ENCODE measurements at regions of chr12 and their contacts with region 1.

Region 1: DNA sequence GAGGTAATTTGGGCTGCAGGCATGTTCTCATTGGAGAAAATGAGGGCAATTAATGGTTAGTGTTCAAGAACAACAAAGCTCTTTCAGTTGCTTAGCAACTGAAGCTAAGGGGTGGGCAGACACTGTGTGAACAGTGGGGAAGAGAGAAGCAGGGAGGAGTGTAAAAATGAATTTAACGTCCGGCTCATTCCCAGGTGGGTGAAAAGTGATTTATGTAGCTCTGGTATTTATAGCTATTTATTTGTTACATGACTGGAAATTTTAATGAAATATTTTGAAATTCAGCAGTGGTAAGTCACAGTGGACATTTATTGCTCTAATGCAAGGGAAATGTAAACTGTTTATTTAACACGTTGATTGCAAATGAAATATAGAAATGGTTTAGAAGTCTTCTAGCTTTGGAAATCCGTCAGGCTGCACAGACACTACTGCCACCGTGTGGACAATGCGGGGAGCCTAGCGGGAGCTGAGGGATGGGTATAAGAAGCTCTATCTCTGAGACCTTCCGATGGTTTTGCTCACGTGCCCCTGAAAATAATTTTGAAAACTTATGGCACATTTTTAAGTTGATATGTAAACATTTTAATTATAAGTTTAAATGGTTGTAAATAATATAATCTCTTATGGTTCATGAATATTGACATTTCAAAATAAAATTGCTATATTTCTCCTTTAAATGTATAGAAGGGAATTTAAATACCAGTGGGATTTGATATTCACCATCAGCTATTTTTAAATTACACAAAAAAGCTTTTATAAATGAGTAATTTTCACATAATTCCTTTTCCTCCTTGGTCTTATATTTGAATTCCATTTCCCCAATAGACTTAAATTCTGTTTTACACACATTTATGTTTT is 54.4 kb downstream of the E2F7 start:
- DNase-seq: peak; percentile 83
- ATAC-seq: peak; percentile 88
- H3K4me3 Mint-ChIP-seq: peak overlapping the region; percentile 52
- H3K27ac Mint-ChIP-seq: no peak overlapping the region
- H3K4me1 Mint-ChIP-seq: peaks cover 6% of the 10 kb centered on the region
- H3K27me3 Mint-ChIP-seq: no peaks in the 10 kb centered on the region
- CTCF ChIP-seq: peak; percentile 85

Region 2: DNA sequence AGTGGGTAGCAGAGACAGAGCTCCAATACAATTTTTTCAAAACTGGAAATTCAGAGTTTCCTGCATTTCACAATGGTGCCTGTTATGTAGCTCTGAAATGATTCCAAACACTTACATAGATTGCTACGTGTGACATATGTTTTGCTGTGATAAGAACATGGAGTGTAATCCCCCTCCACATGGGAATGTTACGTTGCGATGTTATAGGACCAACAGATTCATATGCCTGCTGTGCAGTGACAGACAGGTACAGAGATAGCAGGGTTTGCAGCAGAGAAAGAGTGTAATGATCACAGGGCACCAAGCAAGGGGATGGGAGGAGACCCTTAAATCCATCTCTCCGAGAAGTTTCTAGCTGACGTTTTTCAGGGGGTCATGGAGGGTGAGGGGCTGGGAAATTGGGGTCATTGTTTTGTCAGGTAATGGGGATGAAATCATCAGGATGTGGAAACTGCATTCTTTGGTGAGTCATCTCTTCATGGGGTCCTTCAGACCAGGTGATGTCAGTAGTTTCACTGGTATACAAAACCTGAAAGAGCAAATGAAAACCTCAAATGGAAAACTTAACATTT is 374.7 kb before region 1 on chr12:
- CTCF ChIA-PET with region 1: interaction called, 11 read pairs
- POLR2A ChIA-PET with region 1: no interaction called
- DNase-seq: no peak
- ATAC-seq: peak; percentile 62
- H3K4me3 Mint-ChIP-seq: no peak overlapping the region
- H3K27ac Mint-ChIP-seq: no peak overlapping the region
- H3K4me1 Mint-ChIP-seq: peaks cover 38% of the 10 kb centered on the region
- H3K27me3 Mint-ChIP-seq: no peaks in the 10 kb centered on the region
- CTCF ChIP-seq: no peak

Region 3: DNA sequence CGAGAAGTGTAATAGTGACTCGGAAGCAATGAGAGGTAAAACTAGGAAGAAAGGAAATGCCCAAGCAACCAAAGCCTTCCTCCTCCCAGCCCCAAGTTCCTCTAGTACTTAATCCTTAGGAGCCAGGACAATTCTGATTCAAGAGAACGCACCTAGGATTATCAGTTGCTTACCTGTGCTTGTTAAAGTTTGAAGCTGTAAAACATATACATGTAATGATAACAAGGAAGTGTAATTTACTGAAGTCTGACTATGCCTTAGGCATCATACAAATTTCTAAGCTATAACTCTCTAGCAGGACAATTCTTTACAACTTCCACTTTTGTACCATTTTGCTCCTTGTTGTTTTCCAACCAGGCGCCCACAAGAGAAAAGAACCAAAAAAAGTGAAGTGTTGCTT is 358.5 kb before region 1 on chr12:
- CTCF ChIA-PET with region 1: no interaction called
- POLR2A ChIA-PET with region 1: no interaction called
- DNase-seq: no peak
- ATAC-seq: no peak
- H3K4me3 Mint-ChIP-seq: no peak overlapping the region
- H3K27ac Mint-ChIP-seq: no peak overlapping the region
- H3K4me1 Mint-ChIP-seq: no peaks in the 10 kb centered on the region
- H3K27me3 Mint-ChIP-seq: no peaks in the 10 kb centered on the region
- CTCF ChIP-seq: no peak

Region 4: DNA sequence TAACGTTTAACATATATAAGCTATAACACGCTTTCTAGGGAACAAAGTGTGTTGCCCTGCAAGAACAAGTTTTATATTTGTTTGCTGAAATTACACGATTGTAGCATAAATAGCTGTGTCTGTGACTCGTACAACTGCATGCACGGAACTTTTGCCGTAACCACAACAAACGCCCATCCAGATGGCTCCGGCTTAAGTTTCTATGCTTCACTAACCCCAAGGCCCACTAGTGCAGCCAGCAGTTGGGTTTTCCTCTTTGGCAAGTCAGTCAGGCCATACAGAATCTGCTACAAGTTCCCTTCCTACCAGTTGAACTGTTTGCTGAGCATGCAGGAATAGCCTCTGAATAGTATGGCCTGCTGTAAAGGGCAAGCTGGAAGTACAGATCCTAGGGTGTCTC is 144.2 kb before region 1 on chr12:
- CTCF ChIA-PET with region 1: interaction called, 35 read pairs
- POLR2A ChIA-PET with region 1: no interaction called
- DNase-seq: no peak
- ATAC-seq: no peak
- H3K4me3 Mint-ChIP-seq: no peak overlapping the region
- H3K27ac Mint-ChIP-seq: peak overlapping the region; percentile 60; the same call in 1 of the 2 replicates
- H3K4me1 Mint-ChIP-seq: peaks cover 58% of the 10 kb centered on the region
- H3K27me3 Mint-ChIP-seq: no peaks in the 10 kb centered on the region
- CTCF ChIP-seq: no peak

Region 5: GRCh38 chr12:76878899-76879709 is 131.8 kb before region 1 on chr12 and contains the start of gene CSRP2:
- CTCF ChIA-PET with region 1: interaction called, 35 read pairs
- POLR2A ChIA-PET with region 1: interaction called, 3 read pairs
- DNase-seq: peak; percentile 95
- ATAC-seq: peak; percentile 89
- H3K4me3 Mint-ChIP-seq: peak within 1 kb of the TSS; percentile 95
- H3K27ac Mint-ChIP-seq: peak within 1 kb of the TSS; percentile 98
- H3K4me1 Mint-ChIP-seq: peaks cover 42% of the 10 kb centered on the region
- H3K27me3 Mint-ChIP-seq: no peaks in the 10 kb centered on the region
- CTCF ChIP-seq: no peak
- total RNA-seq, gene CSRP2: 157 to 179 TPM (median 176 TPM) in 3 replicates

Region 6: GRCh38 chr12:76932196-76932595 is 78.7 kb before region 1 on chr12:
- CTCF ChIA-PET with region 1: interaction called, 21 read pairs
- POLR2A ChIA-PET with region 1: no interaction called
- DNase-seq: no peak
- ATAC-seq: no peak
- H3K4me3 Mint-ChIP-seq: no peak overlapping the region
- H3K27ac Mint-ChIP-seq: no peak overlapping the region
- H3K4me1 Mint-ChIP-seq: peaks cover 15% of the 10 kb centered on the region
- H3K27me3 Mint-ChIP-seq: no peaks in the 10 kb centered on the region
- CTCF ChIP-seq: no peak

Region 7: GRCh38 chr12:76952995-76953394 is 57.9 kb before region 1 on chr12:
- CTCF ChIA-PET with region 1: interaction called, 46 read pairs
- POLR2A ChIA-PET with region 1: no interaction called
- DNase-seq: no peak
- ATAC-seq: peak; percentile 86
- H3K4me3 Mint-ChIP-seq: no peak overlapping the region
- H3K27ac Mint-ChIP-seq: no peak overlapping the region
- H3K4me1 Mint-ChIP-seq: peaks cover 14% of the 10 kb centered on the region
- H3K27me3 Mint-ChIP-seq: no peaks in the 10 kb centered on the region
- CTCF ChIP-seq: no peak

Region 8: DNA sequence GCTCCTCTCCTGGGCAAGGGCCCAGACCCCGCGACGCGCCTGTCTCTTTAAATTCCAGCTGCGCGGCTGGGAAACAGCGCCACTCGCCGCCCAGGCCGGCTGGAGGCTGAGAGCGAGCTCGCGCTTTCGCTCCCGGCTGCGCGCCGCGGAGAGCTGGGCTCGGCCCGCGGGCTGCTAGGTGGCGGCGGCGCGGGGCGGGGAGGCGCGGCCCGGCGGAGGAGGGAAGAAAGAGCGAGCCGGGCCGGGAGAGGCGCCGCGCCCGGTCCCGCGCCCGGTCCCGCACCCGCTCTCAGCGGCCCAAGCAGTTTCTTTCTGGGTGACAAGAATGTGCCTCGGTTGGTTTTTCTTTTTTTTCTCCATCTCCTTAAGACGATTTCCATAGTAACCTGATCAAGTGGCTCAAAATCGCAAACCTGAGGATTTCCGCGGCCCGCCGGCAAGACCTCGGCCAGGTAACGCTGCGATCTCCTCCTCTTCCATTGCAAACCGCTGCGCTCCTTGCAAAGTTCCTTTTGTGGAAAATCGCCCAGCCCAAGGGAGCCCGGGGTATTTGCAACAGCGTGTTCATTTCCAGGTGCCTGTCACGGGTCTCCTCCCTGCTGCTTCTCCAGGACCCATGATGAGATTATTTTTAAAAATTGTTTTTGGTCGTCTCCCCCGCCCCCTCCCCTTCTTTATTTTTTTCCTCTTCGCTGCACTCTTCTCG is 314.0 kb after region 1 on chr12:
- CTCF ChIA-PET with region 1: no interaction called
- POLR2A ChIA-PET with region 1: no interaction called
- DNase-seq: peak; percentile 86
- ATAC-seq: peak; percentile 92
- H3K4me3 Mint-ChIP-seq: peak overlapping the region; percentile 93
- H3K27ac Mint-ChIP-seq: peak overlapping the region; percentile 78; the same call in 1 of the 2 replicates
- H3K4me1 Mint-ChIP-seq: peaks cover 21% of the 10 kb centered on the region
- H3K27me3 Mint-ChIP-seq: peaks cover 25% of the 10 kb centered on the region
- CTCF ChIP-seq: no peak